Right ventricle myocardium inferior (tissue), 1 donor: ENCODE measurements at regions of chr4 and their contacts with region 1.

Region 1: DNA sequence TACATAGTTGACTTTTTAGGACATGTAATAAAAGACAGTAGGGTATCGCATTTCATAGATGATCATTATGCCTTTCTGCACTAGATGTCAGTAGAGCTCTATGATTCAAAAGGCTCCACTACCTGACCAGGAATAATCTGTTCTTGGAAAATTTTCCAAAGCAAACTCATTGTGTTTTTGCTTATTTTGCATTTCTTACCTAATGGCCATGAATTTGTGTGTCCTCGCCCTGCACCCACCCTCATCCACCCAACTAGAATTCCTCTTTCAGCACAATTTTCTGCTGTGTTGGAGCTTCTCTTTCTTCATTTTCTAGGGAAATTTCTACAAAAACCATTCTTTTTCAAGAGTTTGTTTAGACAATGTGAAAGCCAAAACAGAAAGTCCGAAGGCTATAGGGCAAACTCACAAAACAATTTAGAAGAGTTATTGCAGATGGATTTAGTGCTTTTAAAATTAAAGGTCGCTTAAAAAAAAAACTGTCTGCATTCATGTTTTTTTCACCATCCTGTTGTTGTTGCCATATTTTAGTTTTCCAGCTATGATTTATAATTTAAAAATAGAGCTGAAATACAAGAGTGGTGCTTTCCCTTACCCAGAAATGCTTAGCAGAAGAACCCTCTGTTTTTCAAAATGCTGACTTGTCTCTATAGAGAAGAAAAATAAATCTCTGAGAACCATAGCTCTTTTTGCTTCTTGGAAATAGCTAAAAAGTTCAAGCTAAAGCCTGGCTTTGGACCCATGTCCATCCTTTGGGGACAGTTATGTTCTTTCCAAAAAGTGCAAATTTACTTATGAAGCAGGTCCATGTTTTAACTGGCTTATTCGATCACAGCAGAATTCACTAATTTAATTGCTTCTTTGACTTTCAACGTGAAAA is 183.7 kb downstream of the SPATA18 start:
- DNase-seq: no peak
- ATAC-seq: peak; percentile 92

Region 2: DNA sequence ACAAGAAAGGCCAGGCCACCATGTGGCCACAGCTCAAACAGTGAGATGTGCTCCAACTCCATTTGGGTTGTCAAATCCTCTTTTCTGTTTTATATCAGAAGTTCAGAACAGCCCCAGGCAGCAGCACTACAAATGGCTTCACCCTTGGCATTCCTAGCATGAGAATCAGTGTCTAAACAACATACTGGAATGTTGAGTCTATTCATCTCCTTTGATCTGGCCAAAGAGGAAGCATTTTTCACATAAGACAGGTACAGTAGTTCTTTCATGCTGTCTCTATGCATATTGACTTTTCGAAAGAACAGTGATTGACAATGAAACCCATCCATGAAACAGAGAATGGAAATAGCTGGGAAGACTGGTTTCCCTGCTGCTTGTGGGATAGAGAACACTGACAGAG is 134.8 kb after region 1 on chr4:
- intact Hi-C with region 1: loop called (anchors 5 kb)
- DNase-seq: no peak
- ATAC-seq: no peak